ENCODE measurements at regions of chr7 and their contacts with region 1.

Region 1: DNA sequence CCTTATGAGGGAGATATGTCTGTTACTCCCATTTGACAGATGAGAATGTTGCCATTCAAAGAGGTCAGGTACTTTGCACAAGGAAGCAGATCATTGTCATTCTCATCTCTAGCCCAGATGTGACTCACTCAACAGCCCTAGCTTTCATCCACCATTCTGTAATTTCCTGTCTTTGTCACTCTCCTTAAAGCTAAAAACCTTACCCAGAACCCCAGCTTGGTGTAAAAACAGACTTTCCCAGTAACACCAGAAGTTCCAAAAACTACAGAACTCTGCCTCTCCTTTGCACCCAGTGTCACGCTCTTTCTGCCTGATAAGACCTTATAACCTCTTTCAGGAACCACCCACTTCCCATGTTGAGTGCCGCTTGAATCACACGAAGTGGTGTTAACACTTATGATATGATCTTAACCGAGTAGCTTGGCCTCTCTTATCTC is 89.1 kb upstream of the SP4 start:
- DNase-seq: peak; percentile 86
- ATAC-seq: peak; percentile 93
- H3K4me3 Mint-ChIP-seq: peak overlapping the region; percentile 22
- H3K27ac Mint-ChIP-seq: peak overlapping the region; percentile 95
- H3K4me1 Mint-ChIP-seq: peaks cover 47% of the 10 kb centered on the region
- H3K27me3 Mint-ChIP-seq: no peaks in the 10 kb centered on the region
- CTCF ChIP-seq: no peak

Region 2: DNA sequence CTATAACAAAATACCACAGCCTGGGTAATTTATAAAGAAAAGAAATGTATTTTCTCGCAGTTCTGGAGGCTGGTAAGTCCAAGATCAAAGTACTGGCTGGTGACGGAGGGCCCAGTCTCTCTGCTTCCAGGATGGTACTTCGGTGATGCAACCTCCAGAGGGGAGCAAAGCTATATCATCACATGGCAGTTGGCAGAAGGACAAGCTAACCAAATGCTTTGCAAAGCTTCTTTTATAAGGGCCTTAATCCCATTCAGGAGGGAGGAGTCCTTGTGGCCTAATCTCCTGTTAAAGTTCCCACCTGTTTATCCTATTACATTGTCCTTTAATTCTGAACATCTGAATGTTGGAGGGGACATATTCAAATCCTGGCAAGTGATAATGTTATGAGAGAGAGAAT is 45.0 kb before region 1 on chr7:
- CTCF ChIA-PET with region 1: no interaction called
- POLR2A ChIA-PET with region 1: no interaction called
- intact Hi-C with region 1: no loop called
- DNase-seq: no peak
- ATAC-seq: no peak
- H3K4me3 Mint-ChIP-seq: no peak overlapping the region
- H3K27ac Mint-ChIP-seq: no peak overlapping the region
- H3K4me1 Mint-ChIP-seq: no peaks in the 10 kb centered on the region
- H3K27me3 Mint-ChIP-seq: no peaks in the 10 kb centered on the region
- CTCF ChIP-seq: no peak

Region 3: DNA sequence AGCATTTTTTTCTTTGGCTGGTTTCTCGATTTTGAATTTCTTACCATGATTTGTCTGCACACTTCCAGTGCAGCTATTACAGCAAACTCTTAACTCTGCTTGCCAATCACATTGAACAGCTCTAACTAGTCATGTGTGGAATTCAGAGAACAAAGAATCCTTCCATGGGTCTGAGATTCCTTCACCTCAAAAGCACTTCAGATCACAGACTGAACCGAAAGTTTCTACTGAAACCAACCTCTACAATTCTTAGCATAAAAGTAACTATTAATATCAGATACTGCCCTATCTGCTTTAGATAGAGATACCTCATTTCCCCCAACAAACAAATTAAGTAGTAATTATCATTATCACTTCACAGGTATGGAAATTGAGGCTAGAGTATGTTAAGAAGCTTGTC is 32.6 kb after region 1 on chr7:
- CTCF ChIA-PET with region 1: interaction called, 3 read pairs
- POLR2A ChIA-PET with region 1: no interaction called
- intact Hi-C with region 1: loop called (anchors 5 kb)
- DNase-seq: no peak
- ATAC-seq: no peak
- H3K4me3 Mint-ChIP-seq: no peak overlapping the region
- H3K27ac Mint-ChIP-seq: no peak overlapping the region
- H3K4me1 Mint-ChIP-seq: peaks cover 18% of the 10 kb centered on the region
- H3K27me3 Mint-ChIP-seq: no peaks in the 10 kb centered on the region
- CTCF ChIP-seq: no peak

Measured in activated CD8-positive, alpha-beta T cell treated with anti-CD3 and anti-CD28 coated beads for 36 hours (primary cell).